Activated B cell treated with CpG ODN at 0.5 μM for 24 hours (primary cell): ENCODE measurements at regions of chr2 and their contacts with region 1.

Region 1: GRCh38 chr2:101341901-101342624 is 33.6 kb upstream of the RNF149 start:
- DNase-seq: peak; percentile 55
- ATAC-seq: no peak
- H3K4me3 Mint-ChIP-seq: no peak overlapping the region
- H3K27ac Mint-ChIP-seq: no peak overlapping the region
- H3K4me1 Mint-ChIP-seq: peaks cover 7% of the 10 kb centered on the region
- H3K27me3 Mint-ChIP-seq: peaks cover 6% of the 10 kb centered on the region
- CTCF ChIP-seq: peak; percentile 50

Region 2: GRCh38 chr2:101328474-101329007 is 13.5 kb before region 1 on chr2:
- CTCF ChIA-PET with region 1: interaction called, 13 read pairs
- POLR2A ChIA-PET with region 1: no interaction called
- intact Hi-C with region 1: no loop called
- DNase-seq: no peak
- ATAC-seq: peak; percentile 28
- H3K4me3 Mint-ChIP-seq: no peak overlapping the region
- H3K27ac Mint-ChIP-seq: no peak overlapping the region
- H3K4me1 Mint-ChIP-seq: no peaks in the 10 kb centered on the region
- H3K27me3 Mint-ChIP-seq: no peaks in the 10 kb centered on the region
- CTCF ChIP-seq: no peak

Region 3: GRCh38 chr2:101419096-101419663 is 77.1 kb after region 1 on chr2:
- CTCF ChIA-PET with region 1: interaction called, 13 read pairs
- POLR2A ChIA-PET with region 1: no interaction called
- intact Hi-C with region 1: loop called (anchors 1 kb)
- DNase-seq: no peak
- ATAC-seq: peak; percentile 88
- H3K4me3 Mint-ChIP-seq: no peak overlapping the region
- H3K27ac Mint-ChIP-seq: no peak overlapping the region
- H3K4me1 Mint-ChIP-seq: peaks cover 6% of the 10 kb centered on the region
- H3K27me3 Mint-ChIP-seq: no peaks in the 10 kb centered on the region
- CTCF ChIP-seq: no peak

Region 4: GRCh38 chr2:101831351-101831865 is 489.3 kb after region 1 on chr2:
- CTCF ChIA-PET with region 1: interaction called, 51 read pairs
- POLR2A ChIA-PET with region 1: no interaction called
- intact Hi-C with region 1: loop called (anchors 1 kb)
- DNase-seq: peak; percentile 37
- ATAC-seq: peak; percentile 82
- H3K4me3 Mint-ChIP-seq: no peak overlapping the region
- H3K27ac Mint-ChIP-seq: peak overlapping the region; percentile 56
- H3K4me1 Mint-ChIP-seq: peaks cover 49% of the 10 kb centered on the region
- H3K27me3 Mint-ChIP-seq: no peaks in the 10 kb centered on the region
- CTCF ChIP-seq: no peak